OCI-LY7 (cell line): ENCODE measurements at regions of chr6 and their contacts with region 1.

Region 1: DNA sequence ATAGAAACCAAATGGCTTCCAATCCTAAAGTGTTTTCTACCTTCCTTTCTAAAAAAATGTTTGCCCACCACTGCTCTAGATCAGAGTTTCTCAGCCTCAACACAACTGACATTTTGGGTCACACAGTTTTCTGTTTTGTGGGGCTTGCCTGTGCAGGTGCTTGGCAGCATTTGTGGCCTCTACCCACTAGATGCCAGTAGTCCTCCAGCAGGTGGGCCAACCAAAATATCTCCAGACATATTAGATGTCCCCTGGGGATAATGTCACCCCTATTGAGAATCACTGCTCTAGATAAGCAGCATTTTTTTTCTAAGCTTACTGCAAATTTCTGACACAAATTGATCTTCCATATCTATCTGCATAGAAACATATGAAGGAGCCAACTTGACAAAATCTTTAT is 26.3 kb upstream of the EPM2A start:
- DNase-seq: peak; percentile 68
- H3K4me3 ChIP-seq: no peak overlapping the region
- H3K27ac ChIP-seq: no peak overlapping the region
- H3K4me1 ChIP-seq: peaks cover 8% of the 10 kb centered on the region
- CTCF ChIP-seq: peak; percentile 79

Region 2: DNA sequence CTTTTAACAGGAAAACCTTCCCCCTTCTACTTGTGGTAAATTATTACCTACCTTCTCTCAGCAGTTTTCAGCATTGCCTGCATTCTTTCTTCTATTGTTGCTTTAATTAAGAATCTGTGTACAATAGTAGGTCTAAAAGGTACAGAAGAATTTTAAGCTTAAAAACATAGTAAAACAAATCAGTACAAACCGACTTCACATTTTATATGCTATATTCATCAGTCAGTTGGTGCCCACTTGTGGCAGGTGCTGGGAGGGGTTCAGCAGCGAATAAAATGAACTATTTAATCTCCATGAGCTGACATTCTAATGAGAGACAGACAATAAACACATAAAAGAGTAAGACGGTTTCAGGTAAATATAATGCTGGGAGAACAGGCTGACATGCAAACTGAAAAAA is 126.4 kb after region 1 on chr6:
- CTCF ChIA-PET with region 1: interaction called, 4 read pairs
- POLR2A ChIA-PET with region 1: interaction called, 4 read pairs
- intact Hi-C with region 1: loop called (anchors 1 kb)
- DNase-seq: peak; percentile 64
- H3K4me3 ChIP-seq: no peak overlapping the region
- H3K27ac ChIP-seq: no peak overlapping the region
- H3K4me1 ChIP-seq: peaks cover 7% of the 10 kb centered on the region
- CTCF ChIP-seq: peak; percentile 98

Region 3: DNA sequence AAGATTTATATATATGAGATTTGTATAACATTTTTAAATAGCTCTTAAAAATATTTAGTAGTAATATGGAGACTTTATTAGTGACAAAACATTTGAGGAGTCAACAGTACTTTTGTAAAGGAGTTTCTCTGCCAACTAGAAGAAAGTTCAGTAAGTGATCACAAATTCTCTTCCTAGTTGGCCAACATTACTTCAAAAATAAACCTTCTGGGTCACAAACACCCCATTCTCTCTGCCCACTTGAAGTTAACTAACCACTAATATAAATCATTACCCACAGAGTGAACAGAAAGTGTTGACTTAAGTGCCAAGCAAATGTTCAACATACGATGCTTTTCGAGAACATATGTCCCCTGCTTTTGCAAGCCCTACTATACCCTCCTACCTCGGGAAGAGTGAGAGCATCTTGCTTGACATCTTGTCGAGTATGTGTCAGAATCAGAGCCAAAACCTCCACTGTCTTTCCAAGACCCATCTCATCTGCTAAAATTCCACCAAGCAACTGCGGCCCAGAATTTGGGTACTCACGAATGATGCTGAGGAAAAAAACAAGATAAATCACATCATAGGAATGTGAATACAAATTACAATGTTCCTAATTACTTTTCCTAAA is 185.6 kb after region 1 on chr6:
- CTCF ChIA-PET with region 1: no interaction called
- POLR2A ChIA-PET with region 1: no interaction called
- intact Hi-C with region 1: no loop called
- DNase-seq: no peak
- H3K4me3 ChIP-seq: no peak overlapping the region
- H3K27ac ChIP-seq: no peak overlapping the region
- H3K4me1 ChIP-seq: no peaks in the 10 kb centered on the region
- CTCF ChIP-seq: no peak

Region 4: DNA sequence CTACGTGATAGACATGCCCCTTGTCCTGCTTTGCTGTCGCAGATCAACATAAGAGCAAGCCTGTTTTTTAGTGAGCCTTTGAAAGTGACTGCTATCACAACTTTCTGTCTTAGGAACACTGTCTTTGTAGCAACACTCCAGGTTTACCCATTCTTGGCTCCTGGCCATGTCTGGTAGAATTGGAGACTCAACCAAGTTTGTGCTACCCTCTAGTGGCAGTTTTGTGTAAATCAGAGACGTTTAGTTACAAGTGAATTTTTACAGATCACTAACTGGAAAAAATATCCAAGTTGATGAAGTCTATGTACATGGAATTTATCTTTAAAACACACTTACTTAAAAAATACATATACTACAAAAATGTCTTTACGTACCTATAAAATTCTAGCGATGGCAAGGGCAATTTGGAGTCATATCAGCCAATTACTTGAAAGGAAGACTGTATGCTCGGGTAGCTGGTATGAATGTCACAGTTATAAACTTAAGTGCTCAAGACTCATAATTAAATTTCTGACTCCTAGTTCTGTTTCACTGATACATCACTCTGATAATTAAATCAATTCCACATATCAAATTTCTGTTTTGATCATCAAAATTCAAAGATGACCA is 938.6 kb after region 1 on chr6:
- CTCF ChIA-PET with region 1: no interaction called
- POLR2A ChIA-PET with region 1: no interaction called
- intact Hi-C with region 1: loop called (anchors 10 kb)
- DNase-seq: peak; percentile 62
- H3K4me3 ChIP-seq: no peak overlapping the region
- H3K27ac ChIP-seq: no peak overlapping the region
- H3K4me1 ChIP-seq: no peaks in the 10 kb centered on the region
- CTCF ChIP-seq: peak; percentile 90